GM12878 (cell line): ENCODE measurements at regions of chr9 and their contacts with region 1.

Region 1: GRCh38 chr9:127943731-127944144 is 6.1 kb upstream of the DPM2 start:
- DNase-seq: no peak
- ATAC-seq: peak; percentile 96
- H3K4me3 ChIP-seq: no peak overlapping the region
- H3K27ac ChIP-seq: no peak overlapping the region
- H3K4me1 ChIP-seq: peaks cover 7% of the 10 kb centered on the region
- H3K27me3 ChIP-seq: no peaks in the 10 kb centered on the region
- CTCF ChIP-seq: peak; percentile 72 to 96 (median 92)
- EP300 ChIP-seq: no peak
- POLR2A ChIP-seq: no peak; the same call in none of the 2 replicates
- RAD21 ChIP-seq: peak; percentile 91

Region 2: GRCh38 chr9:127644943-127645342 is 298.8 kb before region 1 on chr9:
- CTCF ChIA-PET with region 1: no interaction called
- POLR2A ChIA-PET with region 1: no interaction called
- RAD21 ChIA-PET with region 1: no interaction called
- SMC1A ChIA-PET with region 1: no interaction called
- in situ Hi-C with region 1: no loop called
- intact Hi-C with region 1: no loop called
- DNase-seq: no peak
- ATAC-seq: no peak
- H3K4me3 ChIP-seq: no peak overlapping the region
- H3K27ac ChIP-seq: no peak overlapping the region
- H3K4me1 ChIP-seq: no peaks in the 10 kb centered on the region; the same call in 1 of the 2 replicates
- H3K27me3 ChIP-seq: no peaks in the 10 kb centered on the region
- CTCF ChIP-seq: no peak
- EP300 ChIP-seq: no peak
- POLR2A ChIP-seq: no peak
- RAD21 ChIP-seq: no peak

Region 3: DNA sequence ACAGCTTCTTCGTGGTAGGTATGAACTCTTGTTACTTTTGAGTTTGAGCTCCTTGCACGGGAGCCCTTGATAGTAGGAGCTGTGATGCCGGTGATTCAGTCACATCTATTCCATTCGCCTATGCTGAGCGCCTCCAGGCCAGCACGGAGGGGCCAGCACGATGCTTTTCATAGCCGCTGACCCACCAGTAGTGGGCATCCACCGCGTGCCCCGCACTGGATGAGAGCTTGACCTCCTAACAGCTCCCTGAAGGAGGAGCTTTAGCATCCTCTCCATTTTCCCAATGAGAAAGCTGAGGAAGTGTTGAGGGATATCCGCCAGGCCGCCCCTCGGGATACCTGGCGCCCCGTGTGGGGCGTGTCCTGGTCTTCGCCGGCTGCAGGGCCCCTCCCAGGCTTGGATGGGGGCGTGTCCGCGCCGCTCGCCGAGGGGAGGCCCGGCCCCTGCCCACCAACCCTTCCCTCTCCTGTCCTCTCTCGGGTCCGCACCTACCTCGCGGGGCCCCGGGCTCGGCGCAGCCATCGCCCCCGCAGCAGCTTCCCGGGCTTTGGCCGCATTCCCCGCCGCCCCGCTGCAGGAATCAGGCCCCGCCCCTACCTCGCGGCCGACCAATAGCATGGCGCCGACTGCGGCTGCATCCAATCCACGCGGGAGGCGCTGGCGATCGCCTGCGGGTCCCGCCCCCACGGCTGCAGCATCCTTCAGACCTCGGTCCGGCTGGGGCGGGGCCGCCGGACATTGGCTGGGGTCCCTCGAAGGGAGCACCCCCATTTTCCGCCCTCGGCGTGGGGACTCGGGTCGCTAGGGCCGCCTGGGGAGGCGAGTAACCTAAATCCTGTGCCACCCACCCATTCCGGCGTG is 13.3 kb before region 1 on chr9 and contains the start of gene PIP5KL1:
- CTCF ChIA-PET with region 1: interaction called, 19 read pairs
- POLR2A ChIA-PET with region 1: interaction called, 3 read pairs
- RAD21 ChIA-PET with region 1: interaction called, 4 read pairs
- SMC1A ChIA-PET with region 1: no interaction called
- in situ Hi-C with region 1: no loop called
- intact Hi-C with region 1: no loop called
- DNase-seq: no peak
- ATAC-seq: peak; percentile 93
- H3K4me3 ChIP-seq: peak within 1 kb of the TSS; percentile 65
- H3K27ac ChIP-seq: no peak within 1 kb of the TSS
- H3K4me1 ChIP-seq: peaks cover 21% of the 10 kb centered on the region
- H3K27me3 ChIP-seq: peaks cover 2 to 4% of the 10 kb centered on the region in 2 experiments; a peak in 3 of 4 replicates
- CTCF ChIP-seq: no peak
- EP300 ChIP-seq: no peak
- POLR2A ChIP-seq: peak; percentile 51; the same call in 1 of the 2 replicates
- RAD21 ChIP-seq: no peak
- polyA plus RNA-seq, gene PIP5KL1: not detected

Region 4: GRCh38 chr9:127980706-127981558 is 37.2 kb after region 1 on chr9 and contains the start of gene EEIG1:
- CTCF ChIA-PET with region 1: interaction called, 63 read pairs
- POLR2A ChIA-PET with region 1: interaction called, 4 read pairs
- RAD21 ChIA-PET with region 1: interaction called, 5 read pairs
- SMC1A ChIA-PET with region 1: interaction called, 7 read pairs
- in situ Hi-C with region 1: no loop called
- intact Hi-C with region 1: no loop called
- DNase-seq: no peak
- ATAC-seq: peak; percentile 88
- H3K4me3 ChIP-seq: peak within 1 kb of the TSS; percentile 93
- H3K27ac ChIP-seq: peak within 1 kb of the TSS; percentile 76
- H3K4me1 ChIP-seq: peaks cover 53% of the 10 kb centered on the region
- H3K27me3 ChIP-seq: no peaks in the 10 kb centered on the region
- CTCF ChIP-seq: no peak
- EP300 ChIP-seq: no peak
- POLR2A ChIP-seq: peak; percentile 91
- RAD21 ChIP-seq: no peak
- polyA plus RNA-seq, gene EEIG1: 1.2 to 2.7 TPM

Region 5: DNA sequence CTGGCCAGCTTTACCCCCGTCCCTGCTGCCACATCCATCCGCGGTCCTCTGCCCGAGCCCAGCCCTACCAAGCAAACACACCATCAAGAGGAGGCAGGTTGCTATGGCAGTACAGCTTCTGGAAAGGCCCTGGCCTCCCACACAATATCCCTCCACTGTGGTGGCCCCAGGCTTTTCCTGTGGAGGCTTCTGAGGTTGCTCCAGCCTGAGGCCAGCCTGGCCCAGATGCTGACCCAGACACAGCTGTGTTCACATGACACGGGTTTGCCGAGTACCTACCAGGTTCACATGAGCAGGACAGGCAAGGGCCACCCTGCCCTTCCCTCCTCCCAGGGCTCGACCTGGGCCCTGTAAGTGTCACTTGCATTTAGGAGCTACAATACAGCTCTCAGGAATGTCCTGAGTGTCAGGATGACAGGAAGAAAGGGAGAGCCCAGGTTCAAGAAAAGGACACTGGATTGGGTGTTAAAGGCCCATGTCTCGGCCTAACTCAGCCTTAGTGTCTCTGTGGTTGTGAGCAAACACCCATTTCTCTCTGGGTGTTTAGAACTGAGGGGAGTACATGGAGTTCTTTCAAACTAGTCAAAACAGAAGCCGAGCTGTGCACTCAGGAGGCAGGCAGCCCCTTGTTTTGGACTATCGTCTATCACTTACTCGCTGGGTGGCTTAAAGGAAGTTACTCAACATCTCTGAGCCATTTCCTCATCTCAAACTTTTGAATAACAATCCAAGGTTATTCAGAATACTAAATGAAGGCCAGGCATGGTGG is 83.2 kb after region 1 on chr9:
- CTCF ChIA-PET with region 1: interaction called, 332 read pairs
- POLR2A ChIA-PET with region 1: no interaction called
- RAD21 ChIA-PET with region 1: interaction called, 5 read pairs
- SMC1A ChIA-PET with region 1: interaction called, 84 read pairs
- in situ Hi-C with region 1: no loop called
- intact Hi-C with region 1: no loop called
- DNase-seq: no peak
- ATAC-seq: peak; percentile 38
- H3K4me3 ChIP-seq: no peak overlapping the region
- H3K27ac ChIP-seq: peak overlapping the region; percentile 55
- H3K4me1 ChIP-seq: peaks cover 59% of the 10 kb centered on the region
- H3K27me3 ChIP-seq: no peaks in the 10 kb centered on the region
- CTCF ChIP-seq: no peak
- EP300 ChIP-seq: no peak
- POLR2A ChIP-seq: no peak
- RAD21 ChIP-seq: no peak

Region 6: DNA sequence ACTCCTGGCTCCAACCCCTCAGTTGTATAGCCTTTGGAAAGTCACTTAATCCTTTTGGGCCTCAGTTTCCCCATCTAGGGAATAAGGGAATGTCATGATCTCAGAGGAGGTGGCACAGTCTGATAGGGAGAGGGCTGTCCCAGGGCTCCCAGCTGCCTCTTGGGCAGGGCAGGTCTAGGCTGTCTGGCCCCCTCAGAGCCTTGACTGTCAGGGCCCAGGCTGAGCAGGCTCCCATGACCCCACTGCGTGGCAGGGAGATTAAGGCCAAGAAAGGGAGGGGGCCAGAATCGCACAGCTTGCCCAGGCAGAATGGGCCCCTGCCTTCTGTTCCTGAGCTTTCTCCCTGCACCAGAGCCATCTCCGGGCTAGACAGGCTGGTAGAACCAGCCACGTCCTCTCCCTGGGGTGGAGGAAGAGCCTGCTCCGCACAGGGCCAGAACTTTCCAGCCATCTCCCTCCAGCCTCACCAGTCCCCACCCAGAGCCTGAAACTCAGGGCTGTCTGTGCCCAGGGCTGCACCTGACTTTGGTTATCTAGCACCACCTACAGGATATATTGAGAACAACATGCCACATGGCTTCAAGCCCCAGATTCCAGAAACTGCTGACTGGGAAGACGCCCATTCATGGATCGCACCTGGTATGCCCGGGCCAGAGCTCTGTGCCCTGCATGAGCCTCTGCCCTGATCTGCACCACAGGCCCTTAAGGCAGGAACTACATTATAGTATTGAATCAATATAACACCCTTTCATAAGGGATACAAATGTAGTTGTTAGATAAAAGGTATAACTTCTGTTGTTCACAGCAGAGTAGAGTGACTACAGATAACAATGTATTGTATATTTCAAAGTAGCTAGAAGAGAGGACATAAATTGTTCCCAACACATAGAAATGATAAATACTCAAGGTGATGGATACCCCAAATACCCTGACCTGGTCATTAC is 91.4 kb after region 1 on chr9:
- CTCF ChIA-PET with region 1: interaction called, 332 read pairs
- POLR2A ChIA-PET with region 1: no interaction called
- RAD21 ChIA-PET with region 1: interaction called, 83 read pairs
- SMC1A ChIA-PET with region 1: interaction called, 84 read pairs
- in situ Hi-C with region 1: no loop called
- intact Hi-C with region 1: loop called (anchors 1 kb)
- DNase-seq: peak; percentile 60
- ATAC-seq: peak; percentile 82
- H3K4me3 ChIP-seq: no peak overlapping the region
- H3K27ac ChIP-seq: no peak overlapping the region
- H3K4me1 ChIP-seq: peaks cover 42% of the 10 kb centered on the region
- H3K27me3 ChIP-seq: no peaks in the 10 kb centered on the region
- CTCF ChIP-seq: peak; percentile 82 to 91 (median 91); a peak in 5 of 6 replicates
- EP300 ChIP-seq: no peak
- POLR2A ChIP-seq: no peak
- RAD21 ChIP-seq: peak; percentile 98

Region 7: DNA sequence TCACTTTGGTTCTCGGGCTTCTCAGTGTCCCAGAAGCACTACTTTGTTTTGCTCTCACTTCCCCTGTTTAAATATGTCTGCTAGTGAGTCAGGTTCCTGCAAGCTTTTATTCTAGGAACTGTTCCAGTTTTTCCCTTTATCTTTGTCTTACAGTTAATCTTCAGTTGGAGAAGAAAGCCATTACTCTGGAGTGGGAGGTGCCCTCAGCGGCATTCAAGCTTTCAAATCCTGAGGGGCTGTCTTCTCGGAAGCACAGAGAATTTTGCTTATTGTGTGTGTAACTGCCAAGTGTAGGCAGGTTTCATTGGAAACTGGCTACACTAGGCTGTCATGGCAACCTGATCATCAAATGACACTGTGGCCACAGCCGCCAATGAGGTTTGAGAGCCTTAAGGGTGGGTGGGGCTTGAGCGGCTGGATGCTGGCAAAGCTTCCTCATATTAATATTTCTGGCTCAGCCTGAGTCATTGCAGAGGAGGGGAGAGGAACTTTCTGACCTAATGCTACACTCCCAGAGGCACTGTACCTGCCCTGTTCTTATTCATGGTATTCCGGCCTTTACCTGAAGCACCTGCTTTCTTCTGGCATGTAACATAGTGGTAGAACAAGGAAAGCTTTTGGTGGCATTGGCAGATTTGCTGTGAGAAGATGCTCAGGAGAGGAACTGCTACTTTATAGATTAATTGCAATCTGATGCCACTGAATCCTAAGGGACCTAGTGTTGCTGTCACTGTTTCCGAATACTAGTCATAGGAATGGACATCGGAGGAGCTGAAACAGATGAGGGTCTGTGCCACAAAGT is 150.6 kb after region 1 on chr9:
- CTCF ChIA-PET with region 1: interaction called, 15 read pairs
- POLR2A ChIA-PET with region 1: no interaction called
- RAD21 ChIA-PET with region 1: no interaction called
- SMC1A ChIA-PET with region 1: interaction called, 4 read pairs
- in situ Hi-C with region 1: no loop called
- intact Hi-C with region 1: no loop called
- DNase-seq: no peak
- ATAC-seq: peak; percentile 99
- H3K4me3 ChIP-seq: no peak overlapping the region
- H3K27ac ChIP-seq: peak overlapping the region; percentile 51
- H3K4me1 ChIP-seq: peaks cover 25% of the 10 kb centered on the region
- H3K27me3 ChIP-seq: no peaks in the 10 kb centered on the region
- CTCF ChIP-seq: no peak
- EP300 ChIP-seq: no peak
- POLR2A ChIP-seq: no peak
- RAD21 ChIP-seq: no peak

Region 8: GRCh38 chr9:128117613-128118471 is 174.1 kb after region 1 on chr9:
- CTCF ChIA-PET with region 1: interaction called, 22 read pairs
- POLR2A ChIA-PET with region 1: no interaction called
- RAD21 ChIA-PET with region 1: interaction called, 7 read pairs
- SMC1A ChIA-PET with region 1: interaction called, 4 read pairs
- in situ Hi-C with region 1: no loop called
- intact Hi-C with region 1: loop called (anchors 1 kb)
- DNase-seq: no peak
- ATAC-seq: peak; percentile 79
- H3K4me3 ChIP-seq: no peak overlapping the region
- H3K27ac ChIP-seq: no peak overlapping the region
- H3K4me1 ChIP-seq: peaks cover 23% of the 10 kb centered on the region
- H3K27me3 ChIP-seq: no peaks in the 10 kb centered on the region
- CTCF ChIP-seq: peak; percentile 100; a peak in 5 of 6 replicates
- EP300 ChIP-seq: no peak
- POLR2A ChIP-seq: peak; percentile 65
- RAD21 ChIP-seq: peak; percentile 99

Region 9: DNA sequence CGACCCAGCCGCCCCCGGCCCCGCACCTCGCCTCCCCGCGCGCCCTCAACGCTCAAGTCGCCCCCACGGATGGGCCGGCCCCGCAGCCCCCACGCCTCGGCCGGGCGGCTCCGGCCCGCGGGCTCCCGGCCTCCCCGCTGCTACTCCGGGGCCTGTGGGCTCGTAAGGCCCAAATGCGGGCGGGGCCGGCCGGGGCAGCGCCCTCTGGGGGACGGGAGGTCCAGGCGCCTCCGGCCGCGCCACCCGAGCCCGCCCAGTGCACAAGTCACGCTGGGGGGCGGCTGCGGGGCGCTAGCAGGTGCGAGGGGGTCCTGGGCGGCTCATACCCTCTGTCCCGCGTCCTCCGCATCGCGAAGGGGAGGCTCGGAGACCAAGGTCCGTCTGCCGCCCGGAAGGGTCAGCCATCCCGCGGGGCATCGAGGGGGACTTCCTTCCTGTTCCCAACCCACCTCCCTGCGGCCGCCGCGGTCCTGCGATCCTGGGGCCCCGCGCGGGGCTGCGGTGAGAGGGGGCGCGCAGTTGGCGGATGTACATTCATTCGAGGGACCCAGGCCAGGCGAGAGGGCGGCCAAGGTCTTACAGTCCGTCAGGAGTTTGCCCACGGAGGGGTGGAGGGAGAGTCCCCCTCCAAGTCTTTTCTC is 247.8 kb after region 1 on chr9 and contains the start of gene CIZ1:
- CTCF ChIA-PET with region 1: no interaction called
- POLR2A ChIA-PET with region 1: no interaction called
- RAD21 ChIA-PET with region 1: no interaction called
- SMC1A ChIA-PET with region 1: no interaction called
- in situ Hi-C with region 1: no loop called
- intact Hi-C with region 1: no loop called
- DNase-seq: no peak
- ATAC-seq: peak; percentile 98
- H3K4me3 ChIP-seq: peak within 1 kb of the TSS; percentile 74
- H3K27ac ChIP-seq: peak within 1 kb of the TSS; percentile 83
- H3K4me1 ChIP-seq: peaks cover 8% of the 10 kb centered on the region
- H3K27me3 ChIP-seq: no peaks in the 10 kb centered on the region
- CTCF ChIP-seq: peak; percentile 63 to 85 (median 68); a peak in 5 of 6 replicates
- EP300 ChIP-seq: no peak
- POLR2A ChIP-seq: peak; percentile 91
- RAD21 ChIP-seq: 0 out of 2 replicates have a peak, but pooled peaks have one; percentile 5
- polyA plus RNA-seq, gene CIZ1: 1.8 to 5.0 TPM